ENCODE measurements at regions of chr5 and their contacts with region 1.

Region 1: GRCh38 chr5:56951946-56952691 is at the start of gene MIER3:
- DNase-seq: peak in 1 of 2 experiments; percentile 73
- H3K4me3 ChIP-seq: peak within 1 kb of the TSS; percentile 92
- H3K27ac ChIP-seq: no peak within 1 kb of the TSS
- H3K4me1 ChIP-seq: 0 out of 2 replicates have a peak, but pooled peaks cover 5% of the 10 kb centered on the region
- H3K27me3 ChIP-seq: no peaks in the 10 kb centered on the region
- CTCF ChIP-seq: no peak
- total RNA-seq, gene MIER3: 16.4 and 17.3 TPM in 2 replicates

Region 2: GRCh38 chr5:56909294-56910209 is 42.6 kb before region 1 on chr5 and contains the start of gene SETD9:
- CTCF ChIA-PET with region 1: no interaction called
- POLR2A ChIA-PET with region 1: interaction called, 5 read pairs
- intact Hi-C with region 1: loop called (anchors 5 kb)
- DNase-seq: peak; percentile 87 to 97
- H3K4me3 ChIP-seq: peak within 1 kb of the TSS; percentile 98
- H3K27ac ChIP-seq: peak within 1 kb of the TSS; percentile 92
- H3K4me1 ChIP-seq: peaks cover 12% of the 10 kb centered on the region
- H3K27me3 ChIP-seq: no peaks in the 10 kb centered on the region
- CTCF ChIP-seq: no peak
- total RNA-seq, gene SETD9: 6.5 and 7.3 TPM in 2 replicates

Region 3: DNA sequence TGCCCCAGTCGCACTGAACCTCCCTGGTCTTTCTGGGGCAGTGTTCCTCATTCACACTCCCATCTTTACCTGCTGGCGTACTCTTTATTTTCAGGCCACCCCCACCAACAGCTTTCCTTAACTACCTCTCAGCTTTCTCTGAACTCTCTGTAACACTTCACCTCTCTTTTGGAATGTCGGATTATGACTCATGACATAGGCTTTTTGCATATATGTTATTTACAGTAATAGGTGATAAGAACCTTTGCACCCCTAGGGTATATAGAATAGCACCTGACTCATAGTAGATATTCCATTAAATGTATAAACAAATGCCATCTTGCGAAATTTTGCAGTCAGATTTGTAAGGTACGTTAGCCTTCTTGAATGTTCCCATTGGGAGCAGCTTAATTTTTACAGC is 52.7 kb after region 1 on chr5:
- CTCF ChIA-PET with region 1: no interaction called
- POLR2A ChIA-PET with region 1: interaction called, 11 read pairs
- intact Hi-C with region 1: no loop called
- DNase-seq: peak; percentile 42 to 99
- H3K4me3 ChIP-seq: peak overlapping the region; percentile 13; the same call in 1 of the 2 replicates
- H3K27ac ChIP-seq: peak overlapping the region; percentile 74
- H3K4me1 ChIP-seq: peaks cover 44% of the 10 kb centered on the region
- H3K27me3 ChIP-seq: no peaks in the 10 kb centered on the region
- CTCF ChIP-seq: no peak

Region 4: DNA sequence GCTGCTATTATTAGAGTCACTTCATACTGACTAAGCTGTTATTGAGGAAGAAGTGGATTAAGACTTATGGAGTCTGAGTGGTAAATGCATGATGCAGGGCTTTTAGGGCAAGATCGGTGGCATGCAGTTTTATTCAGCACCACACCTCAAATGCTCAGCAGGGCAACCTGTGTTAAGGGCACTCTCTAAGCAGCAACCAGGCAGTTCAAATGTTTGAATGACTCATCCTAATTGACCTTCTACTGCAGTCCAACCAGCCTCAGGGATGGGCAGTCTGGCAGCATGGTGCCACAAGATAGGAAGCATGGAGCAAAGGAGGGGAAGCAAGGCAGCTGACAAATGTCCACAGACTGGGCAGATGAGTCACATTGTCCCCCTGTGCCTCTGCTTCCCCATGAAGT is 80.0 kb after region 1 on chr5:
- CTCF ChIA-PET with region 1: no interaction called
- POLR2A ChIA-PET with region 1: no interaction called
- intact Hi-C with region 1: loop called (anchors 2 kb)
- DNase-seq: peak; percentile 78 to 95
- H3K4me3 ChIP-seq: no peak overlapping the region
- H3K27ac ChIP-seq: peak overlapping the region; percentile 89
- H3K4me1 ChIP-seq: peaks cover 46% of the 10 kb centered on the region
- H3K27me3 ChIP-seq: no peaks in the 10 kb centered on the region
- CTCF ChIP-seq: no peak

Region 5: GRCh38 chr5:57082441-57083067 is 130.4 kb after region 1 on chr5:
- CTCF ChIA-PET with region 1: interaction called, 3 read pairs
- POLR2A ChIA-PET with region 1: no interaction called
- intact Hi-C with region 1: loop called (anchors 5 kb)
- DNase-seq: peak in 1 of 2 experiments; percentile 44
- H3K4me3 ChIP-seq: no peak overlapping the region
- H3K27ac ChIP-seq: no peak overlapping the region
- H3K4me1 ChIP-seq: no peaks in the 10 kb centered on the region
- H3K27me3 ChIP-seq: no peaks in the 10 kb centered on the region
- CTCF ChIP-seq: peak; percentile 76

Region 6: GRCh38 chr5:57137401-57137800 is 185.3 kb after region 1 on chr5:
- CTCF ChIA-PET with region 1: interaction called, 7 read pairs
- POLR2A ChIA-PET with region 1: no interaction called
- intact Hi-C with region 1: loop called (anchors 1 kb)
- DNase-seq: no peak
- H3K4me3 ChIP-seq: no peak overlapping the region
- H3K27ac ChIP-seq: no peak overlapping the region
- H3K4me1 ChIP-seq: no peaks in the 10 kb centered on the region
- H3K27me3 ChIP-seq: no peaks in the 10 kb centered on the region
- CTCF ChIP-seq: no peak